HepG2 (cell line): ENCODE measurements at regions of chr20 and their contacts with region 1.

Region 1: GRCh38 chr20:53623454-53624211 is 30.0 kb upstream of the ZNF217 start:
- DNase-seq: peak; percentile 77
- ATAC-seq: peak; percentile 88
- H3K4me3 ChIP-seq: peak overlapping the region; percentile 54 to 66 (median 66)
- H3K27ac ChIP-seq: peak overlapping the region; percentile 93
- H3K4me1 ChIP-seq: peaks cover 38% of the 10 kb centered on the region
- H3K27me3 ChIP-seq: no peaks in the 10 kb centered on the region
- CTCF ChIP-seq: peak; percentile 46
- EP300 ChIP-seq: peak in 1 of 2 experiments; percentile 64; a peak in 1 of 4 replicates
- POLR2A ChIP-seq: peak; percentile 78 to 81
- RAD21 ChIP-seq: peak; percentile 22; the same call in 1 of the 2 replicates

Region 2: DNA sequence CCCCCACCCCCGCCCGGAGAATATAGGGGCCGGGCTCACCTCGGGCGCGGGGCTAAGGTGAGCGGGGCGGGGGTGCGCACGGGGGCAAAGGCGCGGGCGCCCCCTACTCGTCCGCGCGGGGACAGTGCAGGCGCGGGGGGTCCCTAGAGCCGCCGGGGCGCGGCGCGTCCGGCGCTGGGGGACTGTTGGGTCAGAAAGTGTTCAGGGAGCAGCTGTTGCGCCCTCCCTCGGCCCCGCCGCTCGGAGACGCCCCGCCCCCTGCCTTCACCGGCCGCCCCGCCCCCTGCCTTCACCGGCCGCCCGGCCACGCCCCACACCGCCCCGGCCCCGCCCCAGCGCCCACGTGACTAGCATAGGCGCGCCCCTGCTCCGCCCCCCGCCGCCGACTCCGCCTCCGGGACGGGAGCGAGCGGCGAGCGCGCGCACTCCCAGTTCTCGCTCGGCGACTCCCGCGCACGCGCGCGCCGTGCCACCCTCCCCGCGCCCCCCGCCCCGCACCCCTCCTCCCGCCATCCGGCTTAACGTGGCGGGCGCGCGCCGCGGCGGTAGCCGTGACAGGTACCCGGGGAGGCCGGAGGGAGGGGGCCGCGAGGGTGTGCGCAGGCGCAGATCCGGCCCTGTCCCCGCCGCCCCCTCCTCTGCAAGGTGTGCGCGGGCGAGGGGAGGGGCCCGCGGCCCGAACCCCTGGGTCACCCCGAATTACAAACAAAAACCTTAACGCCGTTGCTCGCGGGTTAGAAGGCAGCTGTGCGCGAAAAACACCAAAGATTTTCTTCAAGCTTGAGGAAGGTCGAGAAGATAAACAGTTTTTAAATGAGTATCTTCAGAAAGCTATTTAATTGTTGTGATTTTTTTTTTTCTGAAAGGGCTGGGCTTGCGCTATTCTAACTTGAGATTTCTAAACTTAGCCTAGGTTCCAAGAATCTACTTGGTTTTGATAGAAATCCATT is 29.3 kb before region 1 on chr20:
- CTCF ChIA-PET with region 1: no interaction called
- POLR2A ChIA-PET with region 1: interaction called, 147 read pairs
- in situ Hi-C with region 1: no loop called
- intact Hi-C with region 1: loop called (anchors 2 kb)
- DNase-seq: peak; percentile 89
- ATAC-seq: peak; percentile 88
- H3K4me3 ChIP-seq: peak overlapping the region; percentile 89 to 98 (median 90)
- H3K27ac ChIP-seq: peak overlapping the region; percentile 87
- H3K4me1 ChIP-seq: peaks cover 43% of the 10 kb centered on the region
- H3K27me3 ChIP-seq: no peaks in the 10 kb centered on the region; a peak in 1 of 5 replicates
- CTCF ChIP-seq: peak; percentile 88
- EP300 ChIP-seq: peak in 1 of 2 experiments; percentile 14; a peak in 1 of 4 replicates
- POLR2A ChIP-seq: peak; percentile 52 to 60
- RAD21 ChIP-seq: peak; percentile 91

Region 3: DNA sequence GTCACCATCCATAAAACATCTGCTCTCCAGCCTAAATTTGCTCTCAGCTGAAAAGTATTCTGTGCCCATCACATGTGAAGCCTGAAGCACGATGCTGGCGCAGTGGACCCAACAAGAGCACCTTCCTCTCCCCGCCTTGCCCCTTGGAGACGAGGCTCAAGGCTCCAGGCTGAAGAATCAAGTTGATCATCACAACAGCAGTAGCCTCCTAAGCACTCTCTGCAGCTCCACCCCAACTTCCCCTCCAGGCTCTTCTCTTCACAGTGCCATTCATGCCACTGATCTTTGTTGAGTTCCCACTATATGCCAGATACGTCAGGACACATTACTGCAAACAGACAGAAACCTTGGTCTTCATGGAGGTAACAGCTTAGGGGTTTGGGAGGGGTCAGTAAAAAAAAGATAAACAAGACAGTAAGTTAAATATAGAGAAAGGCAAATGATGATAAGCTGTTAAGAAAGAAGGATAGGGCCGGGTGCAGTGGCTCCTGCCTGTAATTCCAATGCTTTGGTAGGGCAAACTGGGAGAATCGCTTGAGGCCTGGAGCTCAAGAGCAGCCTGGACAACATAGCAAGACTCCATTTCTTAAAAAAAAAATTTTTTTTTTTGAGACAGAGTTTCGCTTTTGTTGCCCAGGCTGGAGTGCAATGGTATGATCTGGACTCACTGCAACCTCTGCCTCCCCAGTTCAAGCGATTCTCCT is 11.7 kb after region 1 on chr20:
- CTCF ChIA-PET with region 1: no interaction called
- POLR2A ChIA-PET with region 1: interaction called, 25 read pairs
- in situ Hi-C with region 1: no loop called
- intact Hi-C with region 1: no loop called
- DNase-seq: no peak
- ATAC-seq: peak; percentile 36; the same call in 1 of the 3 replicates
- H3K4me3 ChIP-seq: no peak overlapping the region
- H3K27ac ChIP-seq: no peak overlapping the region
- H3K4me1 ChIP-seq: peaks cover 39% of the 10 kb centered on the region
- H3K27me3 ChIP-seq: no peaks in the 10 kb centered on the region
- CTCF ChIP-seq: no peak
- EP300 ChIP-seq: no peak
- POLR2A ChIP-seq: no peak
- RAD21 ChIP-seq: no peak

Region 4: GRCh38 chr20:53660078-53660909 is 36.7 kb after region 1 on chr20:
- CTCF ChIA-PET with region 1: no interaction called
- POLR2A ChIA-PET with region 1: interaction called, 18 read pairs
- in situ Hi-C with region 1: no loop called
- intact Hi-C with region 1: no loop called
- DNase-seq: no peak
- ATAC-seq: no peak
- H3K4me3 ChIP-seq: peak overlapping the region in 2 of 3 experiments; percentile 6 to 7; a peak in 2 of 6 replicates
- H3K27ac ChIP-seq: peak overlapping the region; percentile 9
- H3K4me1 ChIP-seq: peaks cover 55% of the 10 kb centered on the region
- H3K27me3 ChIP-seq: no peaks in the 10 kb centered on the region
- CTCF ChIP-seq: no peak
- EP300 ChIP-seq: no peak
- POLR2A ChIP-seq: no peak
- RAD21 ChIP-seq: no peak

Region 5: GRCh38 chr20:53763707-53764414 is 140.2 kb after region 1 on chr20:
- CTCF ChIA-PET with region 1: no interaction called
- POLR2A ChIA-PET with region 1: interaction called, 23 read pairs
- in situ Hi-C with region 1: no loop called
- intact Hi-C with region 1: no loop called
- DNase-seq: peak; percentile 100
- ATAC-seq: peak; percentile 95
- H3K4me3 ChIP-seq: no peak overlapping the region; a peak in 1 of 6 replicates
- H3K27ac ChIP-seq: peak overlapping the region; percentile 89
- H3K4me1 ChIP-seq: peaks cover 77% of the 10 kb centered on the region
- H3K27me3 ChIP-seq: no peaks in the 10 kb centered on the region
- CTCF ChIP-seq: no peak
- EP300 ChIP-seq: peak; percentile 95 to 99; a peak in 3 of 4 replicates
- POLR2A ChIP-seq: peak; percentile 26 to 48; a peak in 2 of 4 replicates
- RAD21 ChIP-seq: 0 out of 2 replicates have a peak, but pooled peaks have one; percentile 15

Region 6: GRCh38 chr20:53869466-53870258 is 246.0 kb after region 1 on chr20:
- CTCF ChIA-PET with region 1: no interaction called
- POLR2A ChIA-PET with region 1: interaction called, 23 read pairs
- in situ Hi-C with region 1: no loop called
- intact Hi-C with region 1: no loop called
- DNase-seq: peak; percentile 96
- ATAC-seq: peak; percentile 92
- H3K4me3 ChIP-seq: peak overlapping the region in 2 of 3 experiments; percentile 8; a peak in 2 of 6 replicates
- H3K27ac ChIP-seq: peak overlapping the region; percentile 37
- H3K4me1 ChIP-seq: peaks cover 77% of the 10 kb centered on the region
- H3K27me3 ChIP-seq: no peaks in the 10 kb centered on the region
- CTCF ChIP-seq: peak; percentile 99
- EP300 ChIP-seq: peak in 1 of 2 experiments; percentile 79; a peak in 3 of 4 replicates
- POLR2A ChIP-seq: no peak
- RAD21 ChIP-seq: peak; percentile 97